ENCODE measurements at regions of chr13 and their contacts with region 1.

Region 1: GRCh38 chr13:67107979-67108378 is 122.2 kb downstream of the PCDH9 start:
- DNase-seq: no peak
- H3K4me3 ChIP-seq: no peak overlapping the region
- CTCF ChIP-seq: no peak

Region 2: DNA sequence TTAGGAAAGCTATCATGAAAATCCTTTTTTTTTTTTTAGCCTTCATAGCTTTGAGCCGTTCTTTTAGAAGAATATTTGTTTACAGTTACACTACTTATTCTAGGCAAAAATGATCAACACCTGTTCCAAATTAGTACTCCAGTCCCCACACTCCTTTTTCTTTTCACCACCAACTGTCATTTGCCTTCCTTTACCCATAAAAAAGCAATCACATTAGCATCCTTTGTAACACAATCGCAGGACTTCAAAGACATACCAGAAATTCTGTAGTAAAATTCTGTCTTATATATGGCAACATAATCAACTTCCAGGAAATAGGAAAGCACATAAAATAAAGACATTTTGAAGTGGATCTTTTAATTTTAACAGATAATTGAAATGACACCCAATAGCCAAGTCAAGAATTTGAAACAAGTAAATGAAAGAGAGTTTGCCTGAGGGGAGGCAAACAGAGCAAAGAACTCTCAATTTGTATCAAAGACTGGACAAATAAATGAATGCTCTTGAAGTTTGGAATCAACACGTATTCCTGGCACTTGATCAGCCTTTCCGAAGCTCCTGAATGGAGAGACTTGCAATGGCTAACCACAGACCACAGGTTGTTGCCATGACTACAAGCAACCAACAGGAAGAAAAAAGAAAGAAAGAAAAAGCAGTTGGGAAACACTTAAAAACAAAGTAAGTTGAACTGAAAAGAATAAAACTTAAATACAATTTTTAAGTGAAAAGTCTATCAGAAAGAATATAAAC is 84.7 kb before region 1 on chr13:
- in situ Hi-C with region 1: no loop called
- DNase-seq: peak; percentile 99
- H3K4me3 ChIP-seq: no peak overlapping the region
- CTCF ChIP-seq: no peak

Region 3: GRCh38 chr13:67150608-67151007 is 42.6 kb after region 1 on chr13:
- in situ Hi-C with region 1: loop called (anchors 5 kb)
- DNase-seq: no peak
- H3K4me3 ChIP-seq: no peak overlapping the region
- CTCF ChIP-seq: no peak

Measured in astrocyte of the cerebellum (primary cell).